Testis (tissue), 5 donors: ENCODE measurements at regions of chr5 and their contacts with region 1.

Region 1: GRCh38 chr5:61331407-61332357 is at the start of gene ZSWIM6:
- DNase-seq: peak; percentile 100
- H3K4me3 ChIP-seq: peak within 1 kb of the TSS; percentile 89 to 93
- H3K27ac ChIP-seq: peak within 1 kb of the TSS; percentile 89 to 96
- H3K4me1 ChIP-seq: peaks cover 9% of the 10 kb centered on the region
- H3K27me3 ChIP-seq: no peaks in the 10 kb centered on the region
- CTCF ChIP-seq: no peak
- POLR2A ChIP-seq: peak; percentile 85
- total RNA-seq, gene ZSWIM6: 16.5 to 18.0 TPM

Region 2: DNA sequence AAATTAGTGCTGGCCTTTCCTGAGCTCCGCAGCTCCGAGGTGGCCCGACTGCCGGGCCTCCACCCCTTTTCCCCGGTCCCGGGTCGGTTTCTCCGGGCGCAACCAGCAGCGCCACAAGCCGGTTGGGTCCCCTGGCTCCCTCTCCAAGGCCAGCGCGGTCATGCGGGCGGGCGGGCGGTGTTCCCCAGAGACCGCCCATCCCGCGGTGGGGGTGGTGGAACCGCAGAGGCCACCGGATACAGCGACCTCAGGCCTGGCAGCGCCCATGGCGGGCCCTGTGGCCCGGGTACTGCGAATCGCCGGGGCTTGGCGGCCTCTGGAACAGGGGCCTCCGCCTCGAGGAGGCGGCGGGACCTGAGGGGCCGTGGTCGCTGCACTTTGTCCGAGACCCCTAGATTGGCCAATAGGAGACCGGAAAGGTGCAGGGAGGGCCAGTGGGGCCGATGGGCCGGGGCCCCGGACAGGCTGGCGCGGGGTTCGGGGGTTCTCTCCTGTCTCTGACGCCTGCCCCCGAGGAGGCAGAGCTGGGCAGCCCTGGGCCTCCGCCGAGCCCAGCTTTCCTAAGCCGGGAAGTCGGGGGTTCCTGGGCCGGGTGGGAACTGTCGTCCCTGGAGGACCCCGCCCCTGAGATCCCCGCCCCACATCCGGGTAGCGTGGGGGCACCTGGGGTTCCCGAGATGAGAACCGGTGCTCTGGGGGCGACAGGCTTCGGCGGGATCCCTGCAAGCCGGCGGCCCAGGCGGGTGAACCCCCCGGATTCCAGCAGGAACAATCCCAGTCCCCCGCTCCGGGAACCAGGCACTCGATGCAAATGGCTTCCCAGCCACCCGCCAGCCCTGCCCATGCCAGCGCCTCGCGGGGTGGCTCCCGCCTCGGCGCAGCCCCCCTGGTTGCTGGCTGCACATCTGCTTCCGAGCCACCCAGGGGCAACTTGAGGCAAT is 294.3 kb after region 1 on chr5:
- intact Hi-C with region 1: loop called (anchors 10 kb)
- DNase-seq: peak; percentile 88
- H3K4me3 ChIP-seq: peak overlapping the region; percentile 69 to 75
- H3K27ac ChIP-seq: peak overlapping the region; percentile 87
- H3K4me1 ChIP-seq: peaks cover 9% of the 10 kb centered on the region
- H3K27me3 ChIP-seq: no peaks in the 10 kb centered on the region
- CTCF ChIP-seq: no peak
- POLR2A ChIP-seq: no peak